ENCODE measurements at regions of chr13 and their contacts with region 1.

Region 1: DNA sequence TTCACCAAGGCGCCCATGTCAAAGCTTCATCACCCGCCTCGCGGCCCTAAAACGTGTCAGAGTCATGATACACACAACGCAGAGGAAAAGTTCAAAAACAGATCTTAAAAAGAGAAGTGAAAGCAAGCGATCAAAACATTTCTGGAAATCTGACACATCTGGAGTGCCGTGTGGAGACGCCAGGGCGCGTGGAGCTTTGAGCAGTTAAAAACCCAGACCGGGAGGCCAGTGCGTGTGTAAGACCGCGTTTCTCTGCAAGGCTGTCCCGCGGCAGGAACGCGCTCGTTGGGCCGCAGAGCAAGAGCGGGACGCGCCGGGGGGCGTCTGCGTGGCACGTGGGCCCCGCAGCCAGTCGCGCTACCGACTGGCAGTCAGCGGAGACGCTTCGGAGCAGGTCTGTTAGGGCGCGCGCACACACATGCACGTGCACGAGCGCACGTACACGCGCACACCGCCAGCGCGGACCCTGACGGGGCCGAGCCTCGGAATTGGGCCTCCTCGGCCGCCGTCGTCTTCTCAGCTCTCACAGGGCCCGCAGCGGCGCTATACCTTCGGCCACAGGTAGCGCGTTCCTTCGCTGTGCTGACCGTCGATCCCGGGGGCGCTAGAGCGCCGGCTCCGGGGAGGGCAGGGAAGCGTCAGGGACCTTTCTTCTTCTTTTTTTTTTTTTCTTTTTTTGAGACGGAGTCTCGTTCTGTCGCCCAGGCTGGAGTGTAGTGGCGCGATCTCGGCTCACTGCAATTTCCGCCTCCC is 35.8 kb downstream of the RNF6 start:
- DNase-seq: peak; percentile 92
- H3K4me3 ChIP-seq: peak overlapping the region; percentile 83
- H3K27ac ChIP-seq: peak overlapping the region; percentile 63
- H3K4me1 ChIP-seq: peaks cover 7% of the 10 kb centered on the region; the same call in 1 of the 2 replicates
- H3K27me3 ChIP-seq: no peaks in the 10 kb centered on the region

Region 2: DNA sequence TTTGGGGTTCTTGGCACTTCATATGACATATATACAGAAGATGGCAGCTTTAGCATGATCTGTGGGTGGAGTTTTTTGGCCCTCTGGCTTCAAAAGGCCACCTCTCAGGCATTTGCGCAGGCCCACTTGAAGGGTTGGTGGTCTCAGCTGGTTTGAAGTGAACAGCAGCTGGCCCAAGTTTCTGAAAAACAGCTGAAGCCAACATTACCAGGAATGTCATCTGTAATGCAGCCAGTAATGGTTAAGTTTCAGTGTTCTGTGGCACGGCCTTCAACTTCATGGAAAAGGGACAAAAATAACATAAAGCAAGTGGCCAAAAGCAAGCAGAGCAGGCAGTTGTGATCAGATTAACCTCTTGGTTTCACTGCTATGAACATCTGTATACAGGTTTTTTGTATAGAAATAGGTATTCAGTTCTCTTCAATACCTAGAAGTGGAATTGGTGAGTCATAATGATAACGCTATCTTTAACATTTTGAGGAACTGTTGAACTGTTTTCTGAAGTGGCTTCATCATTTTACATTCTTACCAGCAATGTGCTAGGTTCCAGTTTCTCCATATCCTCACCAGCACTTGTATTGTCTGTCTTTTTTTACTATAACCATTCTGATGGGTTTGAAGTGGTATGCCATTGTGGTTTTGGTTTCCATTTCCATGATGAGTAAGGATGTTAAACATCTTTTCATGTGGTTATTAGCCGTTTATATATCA is 379.9 kb before region 1 on chr13:
- in situ Hi-C with region 1: no loop called
- DNase-seq: no peak
- H3K4me3 ChIP-seq: no peak overlapping the region
- H3K27ac ChIP-seq: no peak overlapping the region
- H3K4me1 ChIP-seq: no peaks in the 10 kb centered on the region
- H3K27me3 ChIP-seq: no peaks in the 10 kb centered on the region; the same call in 1 of the 2 replicates

Region 3: GRCh38 chr13:26155575-26155974 is 30.7 kb before region 1 on chr13:
- in situ Hi-C with region 1: no loop called
- DNase-seq: no peak
- H3K4me3 ChIP-seq: no peak overlapping the region
- H3K27ac ChIP-seq: no peak overlapping the region
- H3K4me1 ChIP-seq: no peaks in the 10 kb centered on the region
- H3K27me3 ChIP-seq: peaks cover 4% of the 10 kb centered on the region

Region 4: GRCh38 chr13:26498656-26499591 is 312.6 kb after region 1 on chr13:
- in situ Hi-C with region 1: loop called (anchors 10 kb)
- DNase-seq: peak; percentile 61
- H3K4me3 ChIP-seq: no peak overlapping the region
- H3K27ac ChIP-seq: peak overlapping the region; percentile 68
- H3K4me1 ChIP-seq: peaks cover 57% of the 10 kb centered on the region
- H3K27me3 ChIP-seq: no peaks in the 10 kb centered on the region

Region 5: GRCh38 chr13:26698392-26699196 is 512.3 kb after region 1 on chr13:
- in situ Hi-C with region 1: loop called (anchors 5 kb)
- DNase-seq: peak; percentile 92
- H3K4me3 ChIP-seq: peak overlapping the region; percentile 64
- H3K27ac ChIP-seq: no peak overlapping the region
- H3K4me1 ChIP-seq: peaks cover 5% of the 10 kb centered on the region; the same call in 1 of the 2 replicates
- H3K27me3 ChIP-seq: 0 out of 2 replicates have a peak, but pooled peaks cover 2% of the 10 kb centered on the region

Region 6: DNA sequence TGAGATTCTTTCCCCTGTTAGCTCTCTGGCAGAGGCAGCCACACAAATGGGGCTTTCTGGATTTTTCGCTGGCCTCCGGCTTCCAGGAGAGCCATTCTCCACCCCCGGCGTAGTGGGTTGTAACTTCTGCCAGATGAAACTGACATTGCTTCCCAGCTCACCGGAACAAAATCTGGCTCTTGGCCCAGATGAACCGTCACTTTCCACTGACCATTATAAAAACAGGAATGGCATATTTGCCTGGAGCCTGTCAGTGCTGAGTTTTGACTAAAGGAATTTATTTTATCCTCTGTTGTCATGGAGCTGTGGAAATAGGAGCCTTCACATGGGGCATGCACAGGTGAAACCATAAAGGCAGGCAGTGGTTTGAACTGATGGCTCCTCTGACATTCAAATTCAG is 694.9 kb after region 1 on chr13:
- in situ Hi-C with region 1: loop called (anchors 25 kb)
- DNase-seq: peak; percentile 28
- H3K4me3 ChIP-seq: peak overlapping the region; percentile 54; the same call in 1 of the 2 replicates
- H3K27ac ChIP-seq: no peak overlapping the region
- H3K4me1 ChIP-seq: no peaks in the 10 kb centered on the region
- H3K27me3 ChIP-seq: no peaks in the 10 kb centered on the region; the same call in 1 of the 2 replicates

Measured in GM23248 (cell line).